Caco-2 (cell line): ENCODE measurements at regions of chr12 and their contacts with region 1.

Region 1: GRCh38 chr12:94184995-94185719 is 36.8 kb downstream of the PLXNC1 start:
- DNase-seq: no peak
- H3K4me3 ChIP-seq: no peak overlapping the region
- H3K4me3 Mint-ChIP-seq: no peak overlapping the region
- H3K27ac Mint-ChIP-seq: peak overlapping the region; percentile 91
- H3K4me1 ChIP-seq: peaks cover 57% of the 10 kb centered on the region
- H3K4me1 Mint-ChIP-seq: peaks cover 27% of the 10 kb centered on the region
- H3K27me3 ChIP-seq: no peaks in the 10 kb centered on the region
- H3K27me3 Mint-ChIP-seq: no peaks in the 10 kb centered on the region
- CTCF ChIP-seq: no peak

Region 2: DNA sequence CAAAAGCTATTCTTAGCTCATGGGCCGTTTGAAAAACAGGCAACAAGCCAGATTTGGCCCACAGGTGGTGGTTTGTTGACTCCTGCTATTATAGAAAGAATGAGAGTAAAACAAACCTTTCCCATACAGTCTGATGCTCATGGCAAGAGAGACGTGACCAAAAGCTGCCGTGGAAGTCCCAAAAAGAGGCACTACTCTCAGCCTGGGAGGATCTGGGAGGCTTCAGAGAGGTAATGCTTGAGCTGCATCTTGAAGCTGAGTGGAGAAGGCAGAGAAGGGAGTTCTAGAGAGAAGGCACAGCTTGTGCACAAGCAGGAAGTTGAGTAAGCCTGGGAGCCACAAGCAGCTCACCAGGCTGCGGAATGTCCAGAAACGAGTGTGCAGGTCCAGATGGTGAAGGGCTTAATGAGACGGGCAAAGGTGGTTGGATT is 27.2 kb before region 1 on chr12:
- CTCF ChIA-PET with region 1: no interaction called
- POLR2A ChIA-PET with region 1: no interaction called
- intact Hi-C with region 1: no loop called
- DNase-seq: no peak
- H3K4me3 ChIP-seq: no peak overlapping the region
- H3K4me3 Mint-ChIP-seq: no peak overlapping the region
- H3K27ac Mint-ChIP-seq: peak overlapping the region; percentile 37
- H3K4me1 ChIP-seq: peaks cover 15% of the 10 kb centered on the region
- H3K4me1 Mint-ChIP-seq: peaks cover 20% of the 10 kb centered on the region
- H3K27me3 ChIP-seq: no peaks in the 10 kb centered on the region
- H3K27me3 Mint-ChIP-seq: no peaks in the 10 kb centered on the region
- CTCF ChIP-seq: no peak

Region 3: GRCh38 chr12:94172973-94173372 is 12.2 kb before region 1 on chr12:
- CTCF ChIA-PET with region 1: interaction called, 26 read pairs
- POLR2A ChIA-PET with region 1: interaction called, 11 read pairs
- intact Hi-C with region 1: loop called (anchors 1 kb)
- DNase-seq: peak; percentile 71 to 77
- H3K4me3 ChIP-seq: no peak overlapping the region
- H3K4me3 Mint-ChIP-seq: peak overlapping the region; percentile 70
- H3K27ac Mint-ChIP-seq: peak overlapping the region; percentile 88
- H3K4me1 ChIP-seq: peaks cover 67% of the 10 kb centered on the region
- H3K4me1 Mint-ChIP-seq: peaks cover 59% of the 10 kb centered on the region
- H3K27me3 ChIP-seq: no peaks in the 10 kb centered on the region
- H3K27me3 Mint-ChIP-seq: no peaks in the 10 kb centered on the region
- CTCF ChIP-seq: no peak

Region 4: DNA sequence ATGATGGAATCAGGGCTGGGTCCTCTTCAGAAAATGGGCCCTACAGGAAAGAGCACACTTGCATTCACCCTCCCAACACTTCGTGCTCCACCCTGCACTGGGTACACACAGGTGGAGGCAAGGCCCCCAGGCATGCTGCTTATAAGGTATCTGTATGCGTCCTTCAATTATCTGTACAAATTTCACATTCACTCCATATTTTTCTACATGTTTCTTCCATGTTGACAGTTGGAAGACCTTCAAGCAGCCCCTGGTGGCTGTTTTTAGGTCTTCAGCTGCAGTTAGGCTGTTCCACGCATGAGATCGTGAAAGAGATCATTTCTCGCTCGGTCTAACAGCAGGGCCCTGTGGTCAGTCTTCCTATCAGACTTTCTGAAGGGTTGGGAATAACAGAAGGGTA is 10.3 kb after region 1 on chr12:
- CTCF ChIA-PET with region 1: interaction called, 3 read pairs
- POLR2A ChIA-PET with region 1: no interaction called
- intact Hi-C with region 1: loop called (anchors 1 kb)
- DNase-seq: peak in 1 of 2 experiments; percentile 28
- H3K4me3 ChIP-seq: no peak overlapping the region
- H3K4me3 Mint-ChIP-seq: no peak overlapping the region
- H3K27ac Mint-ChIP-seq: peak overlapping the region; percentile 78
- H3K4me1 ChIP-seq: no peaks in the 10 kb centered on the region
- H3K4me1 Mint-ChIP-seq: peaks cover 6% of the 10 kb centered on the region
- H3K27me3 ChIP-seq: no peaks in the 10 kb centered on the region
- H3K27me3 Mint-ChIP-seq: no peaks in the 10 kb centered on the region
- CTCF ChIP-seq: peak; percentile 33 to 61

Region 5: DNA sequence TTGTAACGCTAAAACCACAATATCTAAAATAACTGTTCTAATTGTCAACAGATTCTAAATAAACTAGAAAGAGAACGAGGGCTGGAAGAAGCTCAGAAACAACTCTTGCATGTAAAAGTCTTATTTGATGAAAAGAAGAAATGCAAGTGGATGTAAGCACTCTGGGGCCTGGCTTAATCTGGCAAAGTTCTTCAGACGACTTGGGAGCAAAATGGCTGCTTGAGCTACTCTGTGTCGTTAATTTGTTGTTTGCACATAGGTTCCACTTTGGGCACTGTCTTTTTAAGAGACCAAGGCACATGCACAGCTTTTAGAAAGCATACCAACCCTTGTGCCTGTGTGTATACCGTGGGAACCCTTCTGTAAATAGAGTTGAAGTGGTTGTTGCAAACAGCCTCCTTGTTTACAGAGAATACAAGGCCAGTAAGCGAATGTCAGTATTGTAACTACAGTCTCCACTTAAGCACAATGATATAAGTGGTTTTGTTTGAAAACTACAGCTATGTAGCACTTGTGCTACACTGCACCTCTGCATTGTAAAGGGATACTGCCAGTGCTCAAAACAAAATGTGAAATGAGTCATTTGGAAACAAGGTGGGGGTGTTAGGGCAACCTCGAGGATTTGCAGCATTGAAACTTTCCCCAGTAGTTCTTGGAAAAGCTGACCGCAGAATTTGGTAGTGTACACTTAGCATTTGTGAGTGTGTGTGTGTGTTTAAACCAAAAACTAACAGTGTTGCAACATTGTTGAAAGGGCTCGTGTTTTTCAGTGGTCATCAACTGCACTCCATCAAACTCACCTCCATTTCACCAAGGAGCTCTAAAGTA is 120.2 kb after region 1 on chr12:
- CTCF ChIA-PET with region 1: no interaction called
- POLR2A ChIA-PET with region 1: no interaction called
- intact Hi-C with region 1: no loop called
- DNase-seq: no peak
- H3K4me3 ChIP-seq: no peak overlapping the region
- H3K4me3 Mint-ChIP-seq: no peak overlapping the region
- H3K27ac Mint-ChIP-seq: no peak overlapping the region
- H3K4me1 ChIP-seq: no peaks in the 10 kb centered on the region
- H3K4me1 Mint-ChIP-seq: peaks cover under 1% of the 10 kb centered on the region
- H3K27me3 ChIP-seq: no peaks in the 10 kb centered on the region
- H3K27me3 Mint-ChIP-seq: no peaks in the 10 kb centered on the region
- CTCF ChIP-seq: no peak